ENCODE measurements at regions of chr3 and their contacts with region 1.

Region 1: DNA sequence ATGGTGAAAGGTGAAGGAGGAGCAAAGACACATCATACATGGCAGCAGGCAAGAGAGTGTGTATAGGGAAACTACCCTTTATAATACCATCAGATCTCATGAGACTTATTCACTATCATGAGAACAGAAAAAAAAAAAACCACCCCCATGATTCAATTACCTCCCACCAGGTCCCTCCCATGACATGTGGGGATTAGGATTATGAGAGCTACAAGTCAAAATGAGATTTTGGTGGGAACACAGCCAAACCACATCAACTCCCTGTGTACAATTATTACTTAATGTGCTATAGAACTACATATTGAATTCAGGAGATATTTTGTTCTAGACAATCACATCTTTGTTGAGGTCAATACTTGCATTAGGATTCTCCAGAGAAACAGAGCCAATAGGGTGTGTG is 313.4 kb downstream of the CNTN6 start:
- DNase-seq: no peak

Region 2: GRCh38 chr3:1275495-1275894 is 130.8 kb before region 1 on chr3:
- intact Hi-C with region 1: no loop called
- DNase-seq: no peak

Region 3: GRCh38 chr3:2061360-2061759 is 655.1 kb after region 1 on chr3:
- intact Hi-C with region 1: loop called in 1 of 2 experiments (anchors 5 kb)
- DNase-seq: no peak

Measured in posterior vena cava (tissue), 2 donors.